Right lobe of liver (tissue), 6 donors: ENCODE measurements at regions of chr19 and their contacts with region 1.

Region 1: DNA sequence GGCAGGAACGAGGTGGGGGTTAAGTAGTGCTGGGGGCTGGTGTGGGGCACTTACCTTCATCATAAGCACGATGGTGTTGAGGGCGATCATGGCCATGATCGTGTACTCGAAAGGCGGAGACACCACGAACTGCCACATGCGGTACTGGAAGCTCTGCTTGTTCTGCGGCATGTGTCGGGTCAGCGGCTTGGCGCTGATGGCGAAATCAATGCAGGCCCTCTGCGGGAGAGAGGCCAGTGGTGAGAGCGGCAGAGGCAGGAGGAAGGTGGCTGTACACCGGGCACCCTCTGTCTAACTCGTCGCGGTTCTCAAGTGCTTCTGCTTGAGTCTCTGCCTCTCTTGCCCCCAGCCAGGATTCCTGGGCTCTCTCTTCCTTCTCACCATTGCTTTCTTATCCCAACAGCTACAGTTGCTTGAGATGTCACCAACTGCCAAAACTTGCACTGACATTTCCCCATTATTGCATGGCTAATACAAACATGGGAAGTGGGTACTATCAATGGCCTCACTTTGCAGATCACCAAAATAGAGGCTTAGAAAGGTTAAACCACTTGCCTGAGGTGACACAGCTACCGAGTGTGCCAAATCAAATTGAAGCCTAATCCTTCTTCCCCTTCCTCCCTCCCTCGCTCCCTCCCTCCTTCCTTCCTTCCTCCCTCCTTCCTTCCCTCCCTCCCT is 105.0 kb downstream of the IER2 start:
- DNase-seq: no peak
- ATAC-seq: no peak
- H3K4me3 ChIP-seq: no peak overlapping the region
- H3K27ac ChIP-seq: no peak overlapping the region
- H3K4me1 ChIP-seq: no peaks in the 10 kb centered on the region
- H3K27me3 ChIP-seq: no peaks in the 10 kb centered on the region
- CTCF ChIP-seq: no peak
- POLR2A ChIP-seq: no peak

Region 2: GRCh38 chr19:12974301-12975220 is 280.6 kb before region 1 on chr19:
- intact Hi-C with region 1: loop called (anchors 10 kb)
- DNase-seq: no peak
- ATAC-seq: no peak
- H3K4me3 ChIP-seq: no peak overlapping the region
- H3K27ac ChIP-seq: no peak overlapping the region
- H3K4me1 ChIP-seq: peaks cover 0 to 4% (median 0%) of the 10 kb centered on the region in 4 donors
- H3K27me3 ChIP-seq: no peaks in the 10 kb centered on the region
- CTCF ChIP-seq: no peak
- POLR2A ChIP-seq: no peak

Region 3: DNA sequence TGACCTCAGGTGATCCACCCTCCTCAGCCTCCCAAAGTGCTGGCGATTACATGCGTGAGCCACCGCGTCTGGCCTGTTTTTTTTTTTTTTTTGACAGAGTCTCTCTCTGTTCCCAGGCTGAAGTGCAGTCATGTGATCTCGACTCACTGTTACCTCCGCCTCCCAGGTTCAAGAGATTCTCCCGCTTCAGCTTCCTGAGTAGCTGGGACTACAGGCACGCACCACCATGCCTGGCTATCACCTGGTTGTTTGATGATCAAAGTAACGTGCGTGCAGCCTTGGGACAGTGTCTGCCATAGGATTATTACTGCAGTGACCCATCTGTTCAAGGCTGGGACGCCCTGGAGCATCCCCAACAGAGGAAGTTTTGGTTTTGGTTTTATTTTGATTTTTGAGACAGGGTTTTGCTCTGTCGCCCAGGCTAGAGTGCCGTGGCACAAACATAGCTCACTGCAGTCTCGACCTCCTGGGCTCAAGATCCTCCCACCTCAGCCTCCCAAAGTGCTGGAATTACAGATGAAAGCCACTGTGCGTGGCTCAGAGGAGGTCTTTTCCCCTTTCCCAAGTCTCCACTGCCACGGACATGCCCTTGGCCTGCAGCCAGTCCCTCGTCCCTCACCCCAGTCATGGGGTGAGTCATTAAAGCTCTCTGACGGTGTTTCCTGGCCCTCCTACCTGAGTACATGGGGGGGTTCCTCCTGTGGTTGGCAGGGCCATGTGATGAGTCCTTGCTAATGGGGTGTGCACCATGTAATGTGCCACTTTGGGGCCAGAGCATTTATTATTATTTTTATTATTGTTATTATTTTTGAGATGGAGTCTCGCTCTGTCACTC is 39.4 kb before region 1 on chr19:
- intact Hi-C with region 1: no loop called
- DNase-seq: no peak
- ATAC-seq: no peak
- H3K4me3 ChIP-seq: no peak overlapping the region
- H3K27ac ChIP-seq: no peak overlapping the region
- H3K4me1 ChIP-seq: peaks cover 0 to 6% (median 0%) of the 10 kb centered on the region in 4 donors
- H3K27me3 ChIP-seq: no peaks in the 10 kb centered on the region
- CTCF ChIP-seq: no peak
- POLR2A ChIP-seq: no peak